AG04450 (cell line): ENCODE measurements at regions of chr5 and their contacts with region 1.

Region 1: GRCh38 chr5:55691265-55692105 is 20.6 kb downstream of the SLC38A9 start:
- DNase-seq: no peak
- H3K4me3 ChIP-seq: no peak overlapping the region
- H3K27ac ChIP-seq: no peak overlapping the region
- H3K27me3 ChIP-seq: no peaks in the 10 kb centered on the region
- CTCF ChIP-seq: peak; percentile 57

Region 2: GRCh38 chr5:54673523-54674225 is 1017.8 kb before region 1 on chr5:
- CTCF ChIA-PET with region 1: no interaction called
- POLR2A ChIA-PET with region 1: no interaction called
- DNase-seq: no peak
- H3K4me3 ChIP-seq: no peak overlapping the region
- H3K27ac ChIP-seq: no peak overlapping the region
- H3K27me3 ChIP-seq: no peaks in the 10 kb centered on the region
- CTCF ChIP-seq: no peak

Region 3: DNA sequence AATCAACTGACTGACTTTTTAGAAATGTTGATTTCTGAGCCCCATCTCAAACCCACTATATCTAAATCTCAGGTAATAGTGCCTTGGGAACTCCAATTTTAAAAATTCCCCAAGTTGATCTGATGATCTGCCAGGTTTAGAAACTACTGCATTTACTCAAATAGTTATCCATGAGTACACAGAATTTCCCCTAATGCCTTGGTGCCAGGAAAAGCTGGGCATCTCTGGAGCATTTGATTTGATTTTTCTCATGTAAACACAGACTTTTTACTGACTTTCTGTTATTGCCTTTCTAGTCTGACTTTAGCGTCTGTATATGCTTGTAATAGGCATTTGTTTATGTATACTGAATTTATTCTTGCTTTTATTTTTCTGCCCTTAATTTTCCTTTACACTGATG is 347.9 kb before region 1 on chr5:
- CTCF ChIA-PET with region 1: interaction called, 19 read pairs
- POLR2A ChIA-PET with region 1: no interaction called
- DNase-seq: no peak
- H3K4me3 ChIP-seq: no peak overlapping the region
- H3K27ac ChIP-seq: no peak overlapping the region
- H3K27me3 ChIP-seq: no peaks in the 10 kb centered on the region
- CTCF ChIP-seq: no peak

Region 4: DNA sequence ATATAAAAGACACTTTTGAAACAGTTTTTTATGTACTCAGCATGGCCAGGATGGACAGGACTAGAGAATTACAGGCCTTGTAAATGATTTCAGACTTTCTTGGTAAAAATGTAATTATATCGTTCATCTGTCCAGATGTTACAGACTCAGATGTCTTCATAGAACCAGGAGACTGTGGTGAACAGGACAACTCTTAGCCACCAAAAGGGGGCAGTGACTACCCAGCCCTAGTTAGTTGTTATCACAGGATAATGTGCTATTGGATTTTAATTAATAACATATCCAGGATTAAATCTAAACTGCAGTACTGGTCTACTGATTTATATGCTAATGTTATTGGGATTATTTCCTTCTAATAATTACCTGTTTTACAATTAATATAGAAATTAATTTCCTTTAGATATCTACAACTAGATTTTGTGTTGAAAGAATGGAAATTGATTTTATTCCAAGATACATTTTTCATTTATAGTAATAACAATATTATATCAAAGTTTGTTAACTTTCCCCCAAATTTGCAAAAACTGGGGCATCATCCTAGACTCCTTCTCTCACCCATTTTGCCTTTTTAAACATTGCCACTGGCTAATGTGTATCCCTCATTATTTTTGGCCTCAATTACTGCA is 284.3 kb before region 1 on chr5:
- CTCF ChIA-PET with region 1: interaction called, 48 read pairs
- POLR2A ChIA-PET with region 1: no interaction called
- DNase-seq: peak; percentile 34
- H3K4me3 ChIP-seq: no peak overlapping the region
- H3K27ac ChIP-seq: no peak overlapping the region
- H3K27me3 ChIP-seq: no peaks in the 10 kb centered on the region
- CTCF ChIP-seq: peak; percentile 83

Region 5: GRCh38 chr5:55418994-55419968 is 272.2 kb before region 1 on chr5:
- CTCF ChIA-PET with region 1: interaction called, 14 read pairs
- POLR2A ChIA-PET with region 1: no interaction called
- DNase-seq: peak; percentile 27
- H3K4me3 ChIP-seq: no peak overlapping the region
- H3K27ac ChIP-seq: no peak overlapping the region
- H3K27me3 ChIP-seq: no peaks in the 10 kb centered on the region
- CTCF ChIP-seq: no peak

Region 6: GRCh38 chr5:55701462-55702103 is 10.1 kb after region 1 on chr5:
- CTCF ChIA-PET with region 1: interaction called, 10 read pairs
- POLR2A ChIA-PET with region 1: no interaction called
- DNase-seq: no peak
- H3K4me3 ChIP-seq: no peak overlapping the region
- H3K27ac ChIP-seq: no peak overlapping the region
- H3K27me3 ChIP-seq: no peaks in the 10 kb centered on the region
- CTCF ChIP-seq: no peak